ENCODE measurements at regions of chr12 and their contacts with region 1.

Region 1: GRCh38 chr12:99043319-99043914 is 398.3 kb downstream of the APAF1 start:
- DNase-seq: peak; percentile 29 to 83 (median 72)
- ATAC-seq: peak; percentile 66 to 91 (median 89)
- H3K4me3 ChIP-seq: no peak overlapping the region
- H3K27ac ChIP-seq: no peak overlapping the region
- H3K4me1 ChIP-seq: no peaks in the 10 kb centered on the region
- H3K27me3 ChIP-seq: no peaks in the 10 kb centered on the region
- CTCF ChIP-seq: peak; percentile 72 to 90 (median 88)

Region 2: GRCh38 chr12:98635657-98636323 is 407.6 kb before region 1 on chr12:
- intact Hi-C with region 1: no loop called
- DNase-seq: no peak
- ATAC-seq: no peak
- H3K4me3 ChIP-seq: no peak overlapping the region
- H3K27ac ChIP-seq: no peak overlapping the region
- H3K4me1 ChIP-seq: no peaks in the 10 kb centered on the region
- H3K27me3 ChIP-seq: no peaks in the 10 kb centered on the region
- CTCF ChIP-seq: no peak

Region 3: GRCh38 chr12:99658671-99659349 is 615.4 kb after region 1 on chr12:
- intact Hi-C with region 1: loop called in 1 of 3 experiments (anchors 10 kb)
- DNase-seq: no peak
- ATAC-seq: no peak
- H3K4me3 ChIP-seq: no peak overlapping the region
- H3K27ac ChIP-seq: no peak overlapping the region
- H3K4me1 ChIP-seq: no peaks in the 10 kb centered on the region
- H3K27me3 ChIP-seq: no peaks in the 10 kb centered on the region
- CTCF ChIP-seq: no peak

Region 4: DNA sequence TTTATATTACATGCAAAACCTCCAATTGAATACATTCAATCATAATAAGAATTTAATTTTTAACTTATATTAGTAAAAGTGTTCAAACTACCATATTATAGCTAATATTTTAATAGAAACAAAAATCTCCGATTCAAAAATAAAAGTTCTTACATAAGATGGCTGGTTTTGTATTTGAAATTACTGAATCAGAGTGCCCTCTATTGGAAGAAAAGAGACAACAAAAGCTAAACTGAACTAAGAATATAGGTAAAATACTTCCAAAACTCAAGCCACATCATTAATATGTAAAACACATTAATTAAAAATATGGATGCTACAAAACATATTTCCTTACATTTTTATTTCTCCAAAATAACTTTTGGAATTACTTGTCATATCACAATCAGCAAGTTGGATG is 724.4 kb after region 1 on chr12:
- intact Hi-C with region 1: loop called (anchors 10 kb)
- DNase-seq: no peak
- ATAC-seq: peak in 3 of 4 donors; percentile 45 to 58 (median 54)
- H3K4me3 ChIP-seq: no peak overlapping the region
- H3K27ac ChIP-seq: no peak overlapping the region
- H3K4me1 ChIP-seq: peaks cover 0 to 3% (median 0%) of the 10 kb centered on the region in 3 donors
- H3K27me3 ChIP-seq: no peaks in the 10 kb centered on the region
- CTCF ChIP-seq: peak in 2 of 4 donors; percentile 42 to 46

Measured in pancreas (tissue), 10 donors.